ENCODE measurements at regions of chr17 and their contacts with region 1.

Region 1: GRCh38 chr17:27236717-27237315 is 57.1 kb upstream of the WSB1 start:
- DNase-seq: peak; percentile 55
- ATAC-seq: peak; percentile 77

Region 2: DNA sequence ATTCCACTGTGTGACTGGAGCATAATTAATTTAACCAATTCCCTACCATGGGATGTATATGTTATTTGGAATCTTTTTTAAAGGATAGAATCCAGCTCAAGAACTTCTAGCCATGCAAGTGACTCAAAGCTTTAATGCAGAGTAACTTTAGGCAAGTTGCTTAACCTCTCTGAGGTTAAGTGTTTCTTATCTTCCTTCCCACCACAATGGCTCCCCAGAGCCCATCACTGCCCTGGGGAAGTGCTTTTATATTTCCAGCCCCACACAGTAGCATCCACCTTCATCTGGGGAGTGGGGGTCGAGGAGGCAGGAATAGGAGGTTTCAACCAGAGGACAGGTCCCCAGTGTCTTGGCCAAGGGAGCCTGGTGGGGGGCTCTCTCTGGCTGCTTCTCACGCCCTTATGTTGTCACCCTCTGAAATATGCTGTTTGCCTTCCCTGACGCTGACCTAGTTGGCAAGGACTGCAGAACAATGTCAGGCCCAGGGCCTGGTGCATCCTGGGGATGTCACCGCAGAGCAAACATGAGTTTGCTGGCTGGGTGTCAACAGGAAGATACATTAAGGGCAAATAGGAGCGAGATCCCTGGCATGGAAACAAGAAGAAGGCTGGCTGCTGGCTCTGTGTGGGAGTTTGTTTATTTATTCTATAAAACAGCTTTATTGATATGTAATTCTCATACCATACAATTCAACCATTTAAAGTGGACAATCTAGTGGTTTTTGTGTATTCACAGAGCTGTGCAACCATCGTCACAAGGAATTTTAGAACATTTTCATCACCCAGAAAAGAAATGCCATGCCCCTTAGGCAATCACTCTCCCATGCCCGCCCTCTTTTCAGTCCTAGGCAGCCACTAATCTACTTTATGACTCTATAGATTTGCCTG is 10.5 kb after region 1 on chr17:
- intact Hi-C with region 1: no loop called
- DNase-seq: peak; percentile 78
- ATAC-seq: peak; percentile 36

Region 3: GRCh38 chr17:27293898-27294688 is 57.3 kb after region 1 on chr17 and contains the start of gene WSB1:
- intact Hi-C with region 1: loop called (anchors 2 kb)
- DNase-seq: peak; percentile 97
- ATAC-seq: peak; percentile 95
- total RNA-seq, gene WSB1: 48.7 TPM

Region 4: DNA sequence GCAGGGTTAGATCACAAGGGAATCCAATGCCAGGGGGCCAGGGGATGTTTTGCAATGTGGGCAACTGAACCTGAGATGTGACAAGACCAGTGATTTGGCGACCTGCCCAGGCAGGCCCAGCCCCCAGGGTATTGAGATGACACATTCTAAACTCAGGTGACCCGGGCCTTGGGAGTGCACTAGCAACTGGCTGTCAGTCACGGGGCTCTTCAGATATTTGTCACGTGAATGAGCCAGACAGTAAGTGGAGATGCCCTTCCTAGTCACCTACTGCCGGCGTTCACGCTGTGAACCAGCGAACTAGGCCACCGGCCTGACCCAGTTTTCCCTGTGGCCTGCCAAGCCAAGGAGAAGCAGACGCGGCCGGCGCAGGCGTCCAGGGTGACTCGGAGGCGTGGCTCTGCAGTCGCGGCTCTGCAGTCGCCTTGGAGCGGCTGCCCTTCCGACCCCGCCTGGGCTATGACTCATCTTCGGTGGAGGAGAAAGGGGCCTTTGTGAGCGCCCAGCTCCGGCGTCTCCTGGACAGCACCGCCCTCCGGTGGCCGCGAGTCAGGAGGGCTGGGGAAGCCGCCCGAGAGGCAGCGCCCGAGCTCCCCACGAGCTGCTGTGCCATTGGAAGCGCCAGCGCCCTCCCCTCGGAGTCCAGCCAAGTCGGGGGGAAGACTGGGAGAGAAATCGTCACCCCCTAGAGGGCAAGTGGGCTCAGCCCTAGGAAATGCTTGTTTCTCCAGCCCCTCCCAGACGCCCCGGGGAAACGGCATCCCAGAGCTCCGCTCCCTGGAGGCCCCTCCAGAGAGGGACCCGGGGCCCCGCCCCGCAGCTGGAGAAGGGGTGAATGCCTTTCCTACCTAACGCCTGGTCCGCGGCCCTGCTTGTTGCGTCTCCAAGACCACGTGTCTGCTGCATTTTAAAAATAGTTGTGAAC is 95.9 kb after region 1 on chr17:
- intact Hi-C with region 1: loop called (anchors 2 kb)
- DNase-seq: peak; percentile 99
- ATAC-seq: peak; percentile 97

Region 5: DNA sequence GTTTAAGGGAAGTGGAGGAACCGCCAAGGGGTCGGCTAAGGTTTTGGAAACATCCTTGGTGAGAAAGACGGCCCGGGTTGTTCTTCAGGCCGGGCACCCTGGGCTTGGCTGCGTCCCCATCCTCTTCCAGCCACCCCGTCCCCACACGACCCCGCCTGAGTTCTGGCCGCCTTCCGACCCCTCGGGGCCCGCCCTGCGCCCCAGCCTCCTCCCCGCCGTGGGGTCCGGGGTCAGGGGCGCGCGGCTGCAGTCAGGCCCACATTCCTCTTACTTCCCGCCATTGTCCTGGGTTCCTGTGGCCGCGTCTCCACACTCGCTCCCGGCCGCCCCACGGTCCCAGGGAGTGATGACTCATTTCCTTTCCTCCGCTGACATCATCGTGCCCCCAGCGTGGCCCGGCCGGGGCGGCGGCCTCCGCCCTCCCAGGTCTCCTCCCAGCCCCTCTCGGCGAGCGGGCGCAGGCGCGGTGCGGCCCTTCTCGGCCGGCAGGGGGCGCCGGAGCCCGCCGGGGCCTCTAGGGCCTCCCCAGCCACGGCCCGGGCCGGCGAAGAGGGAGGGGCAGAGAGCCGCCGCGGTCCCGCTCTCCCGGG is 116.7 kb after region 1 on chr17:
- intact Hi-C with region 1: loop called (anchors 5 kb)
- DNase-seq: peak; percentile 96
- ATAC-seq: peak; percentile 96

Region 6: GRCh38 chr17:27430882-27431491 is 194.2 kb after region 1 on chr17:
- intact Hi-C with region 1: loop called (anchors 2 kb)
- DNase-seq: no peak
- ATAC-seq: peak; percentile 57

Region 7: GRCh38 chr17:27601069-27601975 is 364.5 kb after region 1 on chr17:
- intact Hi-C with region 1: loop called (anchors 2 kb)
- DNase-seq: peak; percentile 81
- ATAC-seq: peak; percentile 44

Region 8: DNA sequence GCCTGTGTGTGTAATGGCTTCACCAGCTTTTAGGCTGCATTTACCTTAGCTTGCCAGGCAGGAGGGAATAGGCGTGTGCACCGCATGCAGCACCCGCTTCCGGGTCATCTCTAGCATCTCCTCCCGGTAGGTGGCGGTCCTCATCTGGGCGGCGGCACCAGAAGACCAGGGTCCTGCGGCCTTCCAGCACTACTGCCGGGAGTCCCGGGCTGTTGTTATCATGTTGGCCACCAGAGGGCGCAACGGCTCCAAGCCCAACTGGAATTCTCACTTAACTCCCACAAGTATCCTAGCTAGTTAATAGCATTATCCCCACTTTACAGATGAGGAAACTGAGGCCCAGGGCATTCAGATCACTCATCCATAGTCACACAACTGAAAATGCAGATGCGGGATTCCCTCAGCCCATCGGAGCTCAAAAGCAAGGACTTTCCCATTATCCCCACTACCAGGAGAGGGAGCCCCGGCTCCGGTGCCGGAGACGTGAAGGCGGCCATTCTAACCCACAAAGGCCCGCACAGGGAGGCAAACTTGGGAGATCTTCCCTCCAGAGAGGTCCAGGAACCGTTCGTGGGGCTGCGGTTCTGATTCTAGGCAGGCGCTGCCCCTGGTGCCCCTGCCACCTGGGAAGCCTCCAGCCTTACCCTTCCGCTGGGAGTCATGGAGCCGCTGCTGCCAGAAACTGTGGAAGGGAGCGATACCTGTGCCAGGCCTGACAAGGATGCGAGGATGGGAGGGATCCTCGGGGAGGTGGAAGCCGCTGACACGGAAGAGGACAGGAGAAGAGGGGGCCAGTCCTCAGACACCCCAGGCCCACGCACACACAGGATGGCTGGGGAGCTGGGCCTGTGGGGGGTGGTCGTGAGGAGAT is 418.1 kb after region 1 on chr17:
- intact Hi-C with region 1: loop called (anchors 5 kb)
- DNase-seq: peak; percentile 87
- ATAC-seq: no peak

Measured in Right ventricle myocardium inferior (tissue), 1 donor.